Caco-2 (cell line): ENCODE measurements at regions of chr7 and their contacts with region 1.

Region 1: GRCh38 chr7:149310113-149310836 is 48.3 kb downstream of the ZNF783 start:
- DNase-seq: peak in 1 of 2 experiments; percentile 56
- H3K4me3 ChIP-seq: no peak overlapping the region
- H3K4me3 Mint-ChIP-seq: no peak overlapping the region
- H3K27ac Mint-ChIP-seq: no peak overlapping the region
- H3K4me1 ChIP-seq: no peaks in the 10 kb centered on the region
- H3K4me1 Mint-ChIP-seq: peaks cover 7% of the 10 kb centered on the region
- H3K27me3 ChIP-seq: no peaks in the 10 kb centered on the region
- H3K27me3 Mint-ChIP-seq: peaks cover 1% of the 10 kb centered on the region
- CTCF ChIP-seq: peak in 1 of 2 experiments; percentile 61

Region 2: DNA sequence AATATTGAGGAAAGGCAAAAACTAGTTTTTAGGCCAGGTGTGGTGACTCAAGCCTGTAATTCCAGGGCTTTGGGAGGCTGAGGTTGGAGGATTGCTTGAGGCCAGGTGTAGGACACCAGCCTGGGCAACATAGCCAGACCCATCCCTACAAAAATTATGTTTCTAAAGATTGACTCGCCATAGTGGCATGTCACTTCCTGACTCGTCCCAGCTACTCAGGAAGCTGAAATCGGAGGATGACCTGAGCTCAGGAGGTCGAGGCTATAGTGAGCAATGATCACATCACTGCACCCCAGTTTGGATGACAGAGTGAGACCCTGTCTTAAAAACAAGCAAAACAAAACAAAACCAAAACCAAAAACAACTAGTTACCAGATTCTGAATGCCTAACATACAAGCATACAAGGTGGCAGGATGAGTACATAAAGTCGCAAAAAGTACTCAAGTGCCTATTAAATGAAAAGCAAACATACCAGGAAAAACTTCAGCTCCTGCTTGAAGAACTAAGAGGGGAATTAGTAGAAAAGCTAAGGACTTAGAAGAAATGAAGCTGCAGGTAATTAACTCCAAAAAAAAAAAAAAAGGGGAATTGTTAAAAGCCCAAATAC is 148.9 kb before region 1 on chr7:
- CTCF ChIA-PET with region 1: no interaction called
- POLR2A ChIA-PET with region 1: no interaction called
- intact Hi-C with region 1: no loop called
- DNase-seq: no peak
- H3K4me3 ChIP-seq: no peak overlapping the region
- H3K4me3 Mint-ChIP-seq: no peak overlapping the region
- H3K27ac Mint-ChIP-seq: peak overlapping the region; percentile 40
- H3K4me1 ChIP-seq: no peaks in the 10 kb centered on the region
- H3K4me1 Mint-ChIP-seq: no peaks in the 10 kb centered on the region
- H3K27me3 ChIP-seq: no peaks in the 10 kb centered on the region
- H3K27me3 Mint-ChIP-seq: no peaks in the 10 kb centered on the region
- CTCF ChIP-seq: no peak

Region 3: DNA sequence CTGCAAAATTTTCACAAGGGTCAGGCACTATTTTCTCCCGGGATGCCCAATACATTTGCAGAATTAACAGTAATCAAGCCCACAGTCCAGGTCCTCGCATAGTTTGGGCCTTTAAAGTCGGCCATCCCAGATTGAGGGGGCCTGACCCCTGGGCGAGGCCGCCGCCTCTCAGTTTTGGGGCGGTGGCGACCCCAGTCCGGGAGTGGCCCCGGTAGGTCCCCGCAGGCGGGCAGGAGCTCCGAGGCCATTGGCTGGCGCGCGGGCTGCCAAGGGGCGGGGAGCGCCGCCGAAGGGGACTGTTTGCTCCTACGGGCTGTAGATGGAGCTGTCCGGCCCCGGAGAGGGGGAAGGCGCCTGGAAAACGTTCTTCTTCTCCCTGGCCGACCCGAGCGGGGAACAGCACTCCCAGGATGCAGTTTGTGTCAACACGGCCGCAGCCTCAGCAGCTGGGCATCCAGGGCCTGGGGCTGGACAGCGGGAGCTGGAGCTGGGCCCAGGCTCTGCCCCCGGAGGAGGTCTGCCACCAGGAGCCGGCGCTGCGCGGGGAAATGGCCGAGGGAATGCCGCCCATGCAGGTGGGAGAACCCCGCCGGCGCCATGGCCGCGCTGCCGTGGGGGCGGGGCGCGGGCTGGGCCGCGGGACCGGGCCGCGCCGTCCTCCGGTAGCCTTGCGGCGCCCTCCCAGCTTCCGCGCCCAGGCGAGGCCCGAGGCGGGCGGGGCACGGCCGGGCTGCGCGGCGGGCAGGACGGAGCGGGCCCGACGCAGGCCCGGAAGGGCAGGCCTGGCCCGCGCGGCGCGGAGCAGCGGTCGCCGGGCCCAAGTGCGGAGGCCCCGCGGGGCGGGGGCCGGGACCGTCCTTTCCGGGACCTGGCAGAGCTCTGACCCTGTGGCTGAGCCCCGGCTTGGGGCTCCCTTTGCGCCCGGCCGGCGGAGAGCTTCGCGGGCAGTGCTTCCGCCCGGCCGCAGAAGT is 114.8 kb before region 1 on chr7 and contains the start of gene ZNF282:
- CTCF ChIA-PET with region 1: no interaction called
- POLR2A ChIA-PET with region 1: no interaction called
- intact Hi-C with region 1: no loop called
- DNase-seq: peak; percentile 94 to 96
- H3K4me3 ChIP-seq: peak within 1 kb of the TSS; percentile 94
- H3K4me3 Mint-ChIP-seq: peak within 1 kb of the TSS; percentile 85
- H3K27ac Mint-ChIP-seq: peak within 1 kb of the TSS; percentile 87
- H3K4me1 ChIP-seq: no peaks in the 10 kb centered on the region; the same call in 1 of the 2 replicates
- H3K4me1 Mint-ChIP-seq: no peaks in the 10 kb centered on the region
- H3K27me3 ChIP-seq: no peaks in the 10 kb centered on the region
- H3K27me3 Mint-ChIP-seq: no peaks in the 10 kb centered on the region
- CTCF ChIP-seq: peak; percentile 49 to 82
- total RNA-seq, gene ZNF282: 35.7 and 44.0 TPM in 2 replicates

Region 4: GRCh38 chr7:149284850-149285626 is 25.2 kb before region 1 on chr7:
- CTCF ChIA-PET with region 1: interaction called, 11 read pairs
- POLR2A ChIA-PET with region 1: no interaction called
- intact Hi-C with region 1: no loop called
- DNase-seq: peak; percentile 98 to 100
- H3K4me3 ChIP-seq: peak overlapping the region; percentile 76
- H3K4me3 Mint-ChIP-seq: peak overlapping the region; percentile 81
- H3K27ac Mint-ChIP-seq: peak overlapping the region; percentile 69
- H3K4me1 ChIP-seq: no peaks in the 10 kb centered on the region
- H3K4me1 Mint-ChIP-seq: peaks cover 8% of the 10 kb centered on the region
- H3K27me3 ChIP-seq: no peaks in the 10 kb centered on the region
- H3K27me3 Mint-ChIP-seq: no peaks in the 10 kb centered on the region
- CTCF ChIP-seq: peak in 1 of 2 experiments; percentile 42

Region 5: GRCh38 chr7:149381245-149381644 is 71.0 kb after region 1 on chr7:
- CTCF ChIA-PET with region 1: no interaction called
- POLR2A ChIA-PET with region 1: no interaction called
- intact Hi-C with region 1: loop called (anchors 1 kb)
- DNase-seq: peak in 1 of 2 experiments; percentile 8
- H3K4me3 ChIP-seq: no peak overlapping the region
- H3K4me3 Mint-ChIP-seq: no peak overlapping the region
- H3K27ac Mint-ChIP-seq: no peak overlapping the region
- H3K4me1 ChIP-seq: no peaks in the 10 kb centered on the region
- H3K4me1 Mint-ChIP-seq: no peaks in the 10 kb centered on the region
- H3K27me3 ChIP-seq: no peaks in the 10 kb centered on the region
- H3K27me3 Mint-ChIP-seq: no peaks in the 10 kb centered on the region
- CTCF ChIP-seq: peak in 1 of 2 experiments; percentile 3

Region 6: DNA sequence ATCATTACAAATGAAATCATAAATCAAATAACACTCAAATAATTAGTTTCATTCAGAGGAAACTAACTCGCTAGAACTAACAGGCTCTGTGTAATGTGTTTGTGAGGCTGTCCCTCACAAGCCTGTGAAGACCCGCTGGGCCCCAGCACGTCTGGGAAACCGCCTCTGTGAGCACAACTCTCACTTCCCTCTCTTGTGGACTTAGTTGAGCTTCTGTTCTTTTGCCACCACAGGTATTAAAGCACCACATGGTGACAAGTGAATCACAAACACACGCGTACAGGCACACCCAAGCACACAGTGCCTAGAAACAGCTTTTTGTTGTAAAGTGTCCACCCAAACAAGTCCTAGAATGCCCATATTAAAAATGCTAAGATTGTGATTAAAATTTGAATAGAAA is 99.6 kb after region 1 on chr7:
- CTCF ChIA-PET with region 1: interaction called, 7 read pairs
- POLR2A ChIA-PET with region 1: no interaction called
- intact Hi-C with region 1: loop called (anchors 1 kb)
- DNase-seq: no peak
- H3K4me3 ChIP-seq: no peak overlapping the region
- H3K4me3 Mint-ChIP-seq: no peak overlapping the region
- H3K27ac Mint-ChIP-seq: no peak overlapping the region
- H3K4me1 ChIP-seq: no peaks in the 10 kb centered on the region
- H3K4me1 Mint-ChIP-seq: no peaks in the 10 kb centered on the region
- H3K27me3 ChIP-seq: no peaks in the 10 kb centered on the region
- H3K27me3 Mint-ChIP-seq: no peaks in the 10 kb centered on the region
- CTCF ChIP-seq: no peak

Region 7: DNA sequence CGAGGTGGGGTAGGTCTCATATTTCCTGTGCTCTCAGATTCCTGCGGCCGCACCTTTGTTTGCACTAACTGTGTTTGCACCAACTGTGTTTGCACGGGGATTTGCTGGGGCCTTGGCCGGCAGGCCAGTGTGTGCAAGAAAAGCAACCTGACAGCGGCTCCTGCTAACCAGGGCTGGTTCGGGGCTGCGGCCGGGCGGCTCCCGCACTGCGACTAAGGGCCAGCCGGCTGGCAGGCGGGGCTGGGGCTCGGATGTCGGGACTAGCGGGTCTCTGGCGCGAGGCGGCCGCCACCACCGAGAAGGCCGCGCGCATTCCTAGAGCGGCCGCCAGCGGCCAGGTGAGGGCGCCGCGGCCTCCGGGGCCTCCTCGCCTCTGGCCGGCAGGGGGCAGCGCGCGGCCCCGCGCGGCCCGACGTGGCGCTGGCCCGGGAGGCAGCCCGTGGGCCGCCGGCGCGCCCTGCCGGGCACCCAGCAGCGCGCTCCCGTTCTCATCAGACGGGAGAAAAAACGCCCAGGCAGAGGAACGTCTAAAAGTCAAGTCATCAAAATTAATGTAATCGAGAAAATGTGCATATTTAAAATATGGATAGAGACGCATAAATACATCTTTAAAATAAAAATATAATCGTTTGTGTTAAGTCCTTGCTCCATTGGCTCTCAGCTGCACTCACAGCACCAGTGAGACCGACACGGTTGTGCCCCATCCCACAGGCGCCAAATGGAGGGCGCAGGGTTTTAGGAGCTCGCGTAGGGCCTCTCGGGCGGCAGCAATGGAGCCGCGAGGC is 112.0 kb after region 1 on chr7:
- CTCF ChIA-PET with region 1: interaction called, 5 read pairs
- POLR2A ChIA-PET with region 1: no interaction called
- intact Hi-C with region 1: loop called (anchors 1 kb)
- DNase-seq: peak; percentile 88 to 91
- H3K4me3 ChIP-seq: peak overlapping the region; percentile 42
- H3K4me3 Mint-ChIP-seq: peak overlapping the region; percentile 78
- H3K27ac Mint-ChIP-seq: peak overlapping the region; percentile 93
- H3K4me1 ChIP-seq: peaks cover 16% of the 10 kb centered on the region; the same call in 1 of the 2 replicates
- H3K4me1 Mint-ChIP-seq: no peaks in the 10 kb centered on the region
- H3K27me3 ChIP-seq: no peaks in the 10 kb centered on the region
- H3K27me3 Mint-ChIP-seq: no peaks in the 10 kb centered on the region
- CTCF ChIP-seq: peak; percentile 41 to 51

Region 8: GRCh38 chr7:149497456-149498261 is 187.4 kb after region 1 on chr7 and contains the start of gene ZNF746:
- CTCF ChIA-PET with region 1: no interaction called
- POLR2A ChIA-PET with region 1: no interaction called
- intact Hi-C with region 1: loop called (anchors 5 kb)
- DNase-seq: peak; percentile 83 to 91
- H3K4me3 ChIP-seq: peak within 1 kb of the TSS; percentile 80
- H3K4me3 Mint-ChIP-seq: peak within 1 kb of the TSS; percentile 90
- H3K27ac Mint-ChIP-seq: peak within 1 kb of the TSS; percentile 66
- H3K4me1 ChIP-seq: peaks cover 8% of the 10 kb centered on the region; the same call in 1 of the 2 replicates
- H3K4me1 Mint-ChIP-seq: peaks cover 20% of the 10 kb centered on the region
- H3K27me3 ChIP-seq: no peaks in the 10 kb centered on the region
- H3K27me3 Mint-ChIP-seq: no peaks in the 10 kb centered on the region
- CTCF ChIP-seq: peak; percentile 50 to 59
- total RNA-seq, gene ZNF746: 19.1 and 19.3 TPM in 2 replicates

Region 9: DNA sequence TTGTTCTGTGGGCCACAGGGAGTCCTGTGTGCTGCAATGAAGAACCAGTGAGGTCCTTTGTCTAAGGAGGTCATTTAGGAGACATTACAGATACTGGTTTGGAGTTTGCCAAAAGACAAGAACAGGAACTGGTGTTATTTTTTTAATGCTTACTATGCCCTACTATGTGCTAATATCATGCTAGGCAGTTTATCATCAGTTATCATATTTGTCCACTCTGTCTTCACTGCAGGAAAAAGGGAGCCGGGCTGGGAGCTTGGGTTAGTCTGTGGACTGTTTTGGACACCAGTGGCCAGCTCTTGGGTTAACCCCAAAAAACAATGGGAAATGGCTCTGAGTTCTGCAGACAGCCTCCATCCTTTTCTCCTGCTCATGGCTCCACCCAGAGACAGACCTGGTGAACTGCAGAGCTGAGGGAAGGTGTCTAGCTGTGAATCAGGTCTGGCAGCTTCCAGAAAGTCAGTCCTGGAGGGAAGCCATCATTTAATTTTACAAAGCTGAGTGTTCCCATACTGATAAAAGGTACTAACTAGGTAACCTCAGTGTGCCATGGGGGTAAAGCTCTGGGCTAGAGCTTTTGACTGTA is 288.5 kb after region 1 on chr7:
- CTCF ChIA-PET with region 1: no interaction called
- POLR2A ChIA-PET with region 1: no interaction called
- intact Hi-C with region 1: loop called (anchors 1 kb)
- DNase-seq: peak; percentile 46 to 49
- H3K4me3 ChIP-seq: no peak overlapping the region
- H3K4me3 Mint-ChIP-seq: no peak overlapping the region
- H3K27ac Mint-ChIP-seq: no peak overlapping the region
- H3K4me1 ChIP-seq: no peaks in the 10 kb centered on the region
- H3K4me1 Mint-ChIP-seq: no peaks in the 10 kb centered on the region
- H3K27me3 ChIP-seq: no peaks in the 10 kb centered on the region
- H3K27me3 Mint-ChIP-seq: no peaks in the 10 kb centered on the region
- CTCF ChIP-seq: peak; percentile 26 to 44